PC-9 (cell line): ENCODE measurements at regions of chr1 and their contacts with region 1.

Region 1: GRCh38 chr1:46757241-46757959 is 38.5 kb upstream of the EFCAB14 start:
- DNase-seq: peak; percentile 87 to 96
- H3K4me3 ChIP-seq: peak overlapping the region; percentile 22; the same call in 1 of the 2 replicates
- H3K27ac ChIP-seq: peak overlapping the region; percentile 90
- H3K4me1 ChIP-seq: peaks cover 67% of the 10 kb centered on the region
- H3K27me3 ChIP-seq: no peaks in the 10 kb centered on the region
- CTCF ChIP-seq: no peak

Region 2: GRCh38 chr1:46637444-46638083 is 119.8 kb before region 1 on chr1:
- CTCF ChIA-PET with region 1: no interaction called
- POLR2A ChIA-PET with region 1: no interaction called
- intact Hi-C with region 1: no loop called
- DNase-seq: no peak
- H3K4me3 ChIP-seq: no peak overlapping the region
- H3K27ac ChIP-seq: no peak overlapping the region
- H3K4me1 ChIP-seq: peaks cover 4% of the 10 kb centered on the region
- H3K27me3 ChIP-seq: no peaks in the 10 kb centered on the region
- CTCF ChIP-seq: no peak

Region 3: DNA sequence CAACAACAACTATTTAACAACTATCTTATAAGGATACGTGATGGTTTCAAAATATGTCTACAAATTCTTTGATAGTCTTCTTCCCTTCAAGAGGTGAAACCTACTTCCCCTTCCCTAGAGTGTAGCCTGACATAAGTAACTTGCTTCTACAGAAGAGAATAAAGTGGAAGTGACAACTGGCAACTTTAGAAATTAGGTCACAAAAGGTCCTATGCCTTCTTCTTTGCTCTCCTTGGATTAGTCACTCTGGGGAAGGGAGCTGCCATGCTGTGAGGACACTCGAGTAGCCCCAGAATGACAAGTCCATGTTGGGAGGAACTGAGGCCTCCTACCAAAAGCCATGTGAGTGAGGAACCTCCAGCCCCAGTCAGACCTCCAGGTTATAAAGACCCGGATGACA is 57.7 kb before region 1 on chr1:
- CTCF ChIA-PET with region 1: interaction called, 10 read pairs
- POLR2A ChIA-PET with region 1: no interaction called
- intact Hi-C with region 1: no loop called
- DNase-seq: no peak
- H3K4me3 ChIP-seq: no peak overlapping the region
- H3K27ac ChIP-seq: no peak overlapping the region
- H3K4me1 ChIP-seq: no peaks in the 10 kb centered on the region
- H3K27me3 ChIP-seq: no peaks in the 10 kb centered on the region
- CTCF ChIP-seq: no peak

Region 4: GRCh38 chr1:46718727-46719622 is 38.4 kb before region 1 on chr1 and contains the start of gene EFCAB14:
- CTCF ChIA-PET with region 1: no interaction called
- POLR2A ChIA-PET with region 1: no interaction called
- intact Hi-C with region 1: loop called (anchors 1 kb)
- DNase-seq: peak; percentile 91 to 100
- H3K4me3 ChIP-seq: peak within 1 kb of the TSS; percentile 82
- H3K27ac ChIP-seq: peak within 1 kb of the TSS; percentile 88
- H3K4me1 ChIP-seq: peaks cover 53% of the 10 kb centered on the region
- H3K27me3 ChIP-seq: no peaks in the 10 kb centered on the region
- CTCF ChIP-seq: no peak
- total RNA-seq, gene EFCAB14: 71.1 and 95.4 TPM in 2 replicates

Region 5: GRCh38 chr1:46806271-46807020 is 49.0 kb after region 1 on chr1:
- CTCF ChIA-PET with region 1: interaction called, 9 read pairs
- POLR2A ChIA-PET with region 1: interaction called, 13 read pairs
- intact Hi-C with region 1: loop called (anchors 1 kb)
- DNase-seq: peak; percentile 69 to 82
- H3K4me3 ChIP-seq: no peak overlapping the region
- H3K27ac ChIP-seq: peak overlapping the region; percentile 73
- H3K4me1 ChIP-seq: peaks cover 51% of the 10 kb centered on the region
- H3K27me3 ChIP-seq: no peaks in the 10 kb centered on the region
- CTCF ChIP-seq: no peak

Region 6: GRCh38 chr1:46862348-46862747 is 104.9 kb after region 1 on chr1:
- CTCF ChIA-PET with region 1: no interaction called
- POLR2A ChIA-PET with region 1: interaction called, 3 read pairs
- intact Hi-C with region 1: loop called (anchors 5 kb)
- DNase-seq: no peak
- H3K4me3 ChIP-seq: no peak overlapping the region
- H3K27ac ChIP-seq: no peak overlapping the region
- H3K4me1 ChIP-seq: peaks cover 5% of the 10 kb centered on the region
- H3K27me3 ChIP-seq: no peaks in the 10 kb centered on the region
- CTCF ChIP-seq: no peak

Region 7: DNA sequence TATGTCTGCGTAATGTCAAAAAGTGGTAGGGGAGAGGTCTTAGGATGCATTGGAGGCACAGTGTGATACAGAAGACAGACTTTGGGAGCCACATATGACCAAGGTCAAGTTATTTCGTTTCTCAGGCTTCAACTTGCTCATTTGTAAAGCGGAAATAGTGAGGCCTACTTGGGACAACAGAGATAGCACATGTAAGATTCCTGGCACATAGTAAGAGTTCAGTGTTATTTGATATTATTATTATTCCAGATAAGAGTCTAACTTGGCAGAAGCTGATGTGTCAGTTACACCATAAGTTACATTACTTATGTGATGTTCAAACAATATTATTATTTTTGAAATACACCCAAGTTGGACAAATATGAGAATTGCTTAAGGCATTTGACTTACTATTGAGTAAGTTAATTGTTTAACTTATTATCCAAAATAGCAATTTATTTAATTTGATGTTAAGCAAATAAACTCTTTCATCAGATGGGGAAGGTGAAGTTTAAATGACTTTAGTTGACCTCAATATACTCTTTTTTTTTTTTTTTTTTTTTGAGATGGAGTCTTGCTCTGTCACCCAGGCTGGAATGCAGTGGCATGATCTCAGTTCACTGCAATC is 255.9 kb after region 1 on chr1:
- CTCF ChIA-PET with region 1: no interaction called
- POLR2A ChIA-PET with region 1: no interaction called
- intact Hi-C with region 1: no loop called
- DNase-seq: no peak
- H3K4me3 ChIP-seq: no peak overlapping the region
- H3K27ac ChIP-seq: no peak overlapping the region
- H3K4me1 ChIP-seq: no peaks in the 10 kb centered on the region
- H3K27me3 ChIP-seq: no peaks in the 10 kb centered on the region
- CTCF ChIP-seq: no peak